ENCODE measurements at regions of chr5 and their contacts with region 1.

Region 1: GRCh38 chr5:154653764-154654485 is 101.3 kb upstream of the LARP1 start:
- DNase-seq: peak; percentile 39 to 53
- H3K4me3 ChIP-seq: no peak overlapping the region
- H3K4me3 Mint-ChIP-seq: no peak overlapping the region
- H3K27ac Mint-ChIP-seq: peak overlapping the region; percentile 32
- H3K4me1 ChIP-seq: peaks cover 27% of the 10 kb centered on the region
- H3K4me1 Mint-ChIP-seq: no peaks in the 10 kb centered on the region
- H3K27me3 ChIP-seq: no peaks in the 10 kb centered on the region
- H3K27me3 Mint-ChIP-seq: no peaks in the 10 kb centered on the region
- CTCF ChIP-seq: no peak

Region 2: DNA sequence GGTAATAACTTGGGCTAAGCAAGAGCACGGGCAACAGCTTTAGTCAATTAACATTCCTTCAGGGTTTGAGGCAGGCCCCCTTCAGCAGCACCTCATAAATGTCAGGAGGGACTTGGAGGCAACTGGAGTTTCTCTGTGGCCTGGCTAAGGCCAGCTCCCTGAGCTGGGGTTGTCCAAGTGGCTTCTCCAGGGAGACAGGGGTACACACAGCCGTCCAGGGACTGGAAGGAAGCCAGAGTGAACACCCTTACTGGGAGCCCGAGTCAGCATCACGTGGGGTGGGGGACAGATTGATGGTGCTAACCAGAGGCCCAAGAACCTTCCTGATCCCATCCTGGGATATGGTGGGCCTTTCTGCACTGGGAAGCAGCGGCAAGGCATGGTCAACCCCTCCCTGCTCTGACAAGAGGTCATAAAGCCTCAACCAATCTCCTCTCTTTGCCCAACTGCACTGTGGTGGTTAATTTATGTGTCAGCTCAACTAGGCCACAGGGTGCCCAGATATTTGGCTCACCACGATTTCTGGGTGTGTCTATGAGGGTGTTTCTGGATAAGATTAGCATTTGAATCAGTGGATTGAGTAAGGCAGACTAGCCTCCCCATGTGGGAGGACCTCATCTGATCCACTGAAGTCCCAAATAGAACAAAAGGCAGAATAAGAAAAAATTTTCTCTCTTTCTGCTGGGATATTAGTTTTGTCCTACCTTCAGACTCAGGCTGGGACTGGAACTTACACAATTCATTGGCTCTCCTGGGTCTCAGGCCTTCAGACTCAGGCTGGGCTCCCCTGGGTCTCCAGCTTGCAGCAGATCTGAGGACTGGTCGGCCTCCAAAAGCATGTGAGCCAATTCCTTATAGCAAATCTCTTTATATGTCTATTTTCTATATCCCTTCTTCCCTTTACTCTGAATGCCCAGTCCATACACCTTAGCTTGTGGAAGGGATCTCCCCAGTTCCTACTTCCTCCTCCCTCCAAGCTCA is 25.9 kb before region 1 on chr5:
- CTCF ChIA-PET with region 1: no interaction called
- POLR2A ChIA-PET with region 1: no interaction called
- intact Hi-C with region 1: no loop called
- DNase-seq: no peak
- H3K4me3 ChIP-seq: no peak overlapping the region
- H3K4me3 Mint-ChIP-seq: no peak overlapping the region
- H3K27ac Mint-ChIP-seq: no peak overlapping the region
- H3K4me1 ChIP-seq: no peaks in the 10 kb centered on the region
- H3K4me1 Mint-ChIP-seq: no peaks in the 10 kb centered on the region
- H3K27me3 ChIP-seq: no peaks in the 10 kb centered on the region; the same call in 1 of the 2 replicates
- H3K27me3 Mint-ChIP-seq: no peaks in the 10 kb centered on the region
- CTCF ChIP-seq: no peak

Region 3: DNA sequence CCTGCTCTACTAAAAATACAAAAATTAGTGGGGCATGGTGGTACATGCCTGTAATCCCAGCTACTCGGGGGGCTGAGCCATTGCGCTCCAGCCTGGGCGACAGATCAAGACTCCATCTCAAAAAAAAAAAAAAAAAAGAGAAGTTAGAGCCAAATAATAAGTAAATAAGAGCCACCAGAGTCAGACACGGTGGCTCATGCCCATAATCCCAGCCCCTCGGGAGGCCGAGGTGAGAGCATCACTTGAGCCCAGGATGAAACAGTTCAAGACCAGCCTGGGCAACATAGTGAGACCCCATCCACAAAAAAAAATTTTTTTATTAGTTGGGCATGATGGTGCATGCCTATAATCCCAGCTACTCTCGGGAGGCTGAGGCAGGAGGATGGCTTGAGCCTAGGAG is 15.5 kb after region 1 on chr5:
- CTCF ChIA-PET with region 1: no interaction called
- POLR2A ChIA-PET with region 1: no interaction called
- intact Hi-C with region 1: no loop called
- DNase-seq: no peak
- H3K4me3 ChIP-seq: no peak overlapping the region
- H3K4me3 Mint-ChIP-seq: no peak overlapping the region
- H3K27ac Mint-ChIP-seq: no peak overlapping the region
- H3K4me1 ChIP-seq: no peaks in the 10 kb centered on the region
- H3K4me1 Mint-ChIP-seq: no peaks in the 10 kb centered on the region
- H3K27me3 ChIP-seq: no peaks in the 10 kb centered on the region
- H3K27me3 Mint-ChIP-seq: no peaks in the 10 kb centered on the region
- CTCF ChIP-seq: no peak

Region 4: DNA sequence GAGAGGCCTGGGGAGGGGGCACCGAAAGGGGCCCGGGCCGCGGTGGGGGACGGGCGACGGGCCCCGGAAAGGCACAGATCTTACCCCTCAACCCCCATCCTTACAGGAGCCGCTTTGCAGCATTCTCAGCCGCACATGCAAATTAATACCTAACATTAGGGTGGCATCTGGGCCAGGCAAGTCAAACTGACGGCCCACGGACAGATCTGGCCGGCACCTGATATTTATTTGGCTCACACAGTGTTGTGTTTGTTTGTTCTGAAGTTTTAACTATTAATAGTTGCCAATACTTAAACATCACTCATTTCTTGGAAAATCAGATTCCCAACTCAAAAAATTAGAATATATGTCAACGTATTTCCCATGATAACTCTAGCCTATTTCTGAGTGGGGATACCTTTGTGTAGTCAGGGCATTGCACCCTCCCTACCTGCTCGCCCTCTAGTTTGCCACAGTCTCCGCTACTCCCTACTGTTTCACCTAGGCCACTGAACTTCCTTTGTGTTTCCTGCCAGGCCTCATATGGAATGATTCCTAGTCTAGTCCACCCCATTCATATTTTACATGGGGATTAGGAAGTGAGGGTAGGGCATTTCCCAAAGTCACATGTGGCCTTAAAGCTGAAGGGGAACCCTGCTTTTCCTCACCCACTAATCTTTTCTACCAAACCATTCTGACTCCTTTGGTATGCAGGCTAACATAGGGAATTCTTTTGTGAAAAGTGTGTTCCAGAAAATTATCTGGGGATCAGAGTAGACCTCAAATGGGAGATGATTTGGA is 29.4 kb after region 1 on chr5:
- CTCF ChIA-PET with region 1: no interaction called
- POLR2A ChIA-PET with region 1: interaction called, 4 read pairs
- intact Hi-C with region 1: loop called (anchors 1 kb)
- DNase-seq: no peak
- H3K4me3 ChIP-seq: peak overlapping the region; percentile 58
- H3K4me3 Mint-ChIP-seq: peak overlapping the region; percentile 89
- H3K27ac Mint-ChIP-seq: peak overlapping the region; percentile 95
- H3K4me1 ChIP-seq: peaks cover 12% of the 10 kb centered on the region; the same call in 1 of the 2 replicates
- H3K4me1 Mint-ChIP-seq: peaks cover 11% of the 10 kb centered on the region
- H3K27me3 ChIP-seq: no peaks in the 10 kb centered on the region
- H3K27me3 Mint-ChIP-seq: no peaks in the 10 kb centered on the region
- CTCF ChIP-seq: no peak

Region 5: DNA sequence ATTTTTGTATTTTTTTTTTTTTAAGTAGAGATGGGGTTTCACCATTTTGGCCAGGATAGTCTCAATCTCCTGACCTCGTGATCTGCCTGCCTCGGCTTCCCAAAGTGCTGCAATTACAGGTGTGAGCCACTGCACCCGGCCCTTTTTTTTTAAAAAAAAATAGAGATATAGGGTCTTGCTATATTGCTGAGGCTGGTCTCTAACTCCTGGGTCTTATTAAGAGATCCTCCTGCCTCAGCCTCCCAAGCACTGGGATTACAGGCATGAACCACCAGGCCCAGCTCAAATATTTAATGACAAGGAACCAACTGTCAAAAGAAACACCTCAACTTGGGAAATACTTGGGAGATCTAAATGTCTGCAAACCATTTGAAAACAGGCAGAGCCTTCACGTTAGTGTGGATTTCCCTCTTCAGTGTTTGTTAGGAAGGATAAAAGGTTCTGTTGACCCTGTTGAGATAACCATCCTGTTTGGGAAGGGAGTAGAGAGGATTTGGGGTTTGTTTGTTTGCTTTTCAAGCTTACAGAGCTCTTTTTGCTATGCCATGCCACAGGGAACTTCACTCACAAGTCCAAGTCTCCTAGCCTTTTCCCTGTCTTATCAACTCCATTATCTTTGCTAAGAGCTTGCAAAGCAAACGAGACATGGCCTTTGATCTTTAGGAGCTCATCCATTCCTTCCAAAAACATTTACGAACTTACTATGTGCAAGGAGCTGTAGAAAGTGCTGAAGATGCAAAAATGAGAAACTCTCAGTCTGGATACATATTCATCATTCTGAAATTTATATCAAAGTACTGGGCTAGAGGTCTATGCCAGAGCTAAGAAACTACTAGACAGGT is 189.0 kb after region 1 on chr5:
- CTCF ChIA-PET with region 1: interaction called, 11 read pairs
- POLR2A ChIA-PET with region 1: interaction called, 7 read pairs
- intact Hi-C with region 1: no loop called
- DNase-seq: peak; percentile 56 to 63
- H3K4me3 ChIP-seq: no peak overlapping the region
- H3K4me3 Mint-ChIP-seq: peak overlapping the region; percentile 29
- H3K27ac Mint-ChIP-seq: no peak overlapping the region
- H3K4me1 ChIP-seq: peaks cover 47% of the 10 kb centered on the region
- H3K4me1 Mint-ChIP-seq: peaks cover 32% of the 10 kb centered on the region
- H3K27me3 ChIP-seq: no peaks in the 10 kb centered on the region
- H3K27me3 Mint-ChIP-seq: no peaks in the 10 kb centered on the region
- CTCF ChIP-seq: no peak

Measured in Caco-2 (cell line).